PC-9 (cell line): ENCODE measurements at regions of chr18 and their contacts with region 1.

Region 1: DNA sequence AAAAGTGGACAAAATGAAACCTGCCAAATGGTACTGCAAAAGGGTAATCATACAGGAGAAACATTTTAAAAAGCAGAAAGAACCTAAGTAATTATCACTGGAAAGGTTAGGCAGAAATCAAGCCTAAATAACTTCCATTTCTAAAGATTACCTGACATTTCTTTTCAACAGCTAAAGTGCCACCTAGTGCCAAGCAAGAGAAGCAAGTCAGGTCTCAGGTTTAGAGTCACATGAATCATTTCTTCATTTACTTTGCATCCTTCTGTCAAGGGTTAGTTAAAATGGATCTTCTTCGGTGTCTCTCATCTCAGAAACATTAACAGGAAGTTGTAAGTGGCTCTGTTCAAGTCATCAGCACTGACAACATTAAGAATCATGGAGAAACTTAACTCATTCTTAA is 90.3 kb downstream of the AKAIN1 start:
- DNase-seq: no peak
- H3K4me3 ChIP-seq: no peak overlapping the region
- H3K27ac ChIP-seq: no peak overlapping the region
- H3K4me1 ChIP-seq: no peaks in the 10 kb centered on the region
- H3K27me3 ChIP-seq: no peaks in the 10 kb centered on the region
- CTCF ChIP-seq: no peak; the same call in 1 of the 2 replicates

Region 2: DNA sequence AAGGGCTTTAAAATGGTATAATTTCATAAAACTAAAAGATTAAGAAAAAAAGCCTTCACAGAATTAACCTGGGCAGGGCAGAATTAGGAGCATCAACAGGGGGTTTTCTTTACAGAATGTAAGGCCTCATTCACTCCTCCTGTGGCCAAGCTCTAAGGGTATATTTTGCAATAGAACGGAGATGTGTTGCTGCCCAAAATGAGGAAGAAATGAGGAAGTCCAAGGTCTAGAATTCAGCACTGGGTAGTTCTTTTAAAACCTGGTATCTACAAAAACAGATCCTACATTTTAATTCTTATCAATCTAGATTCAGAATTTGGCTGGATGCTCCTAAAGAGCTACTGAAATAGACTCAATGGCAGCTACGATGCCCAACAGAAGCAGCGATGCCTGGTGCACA is 11.5 kb before region 1 on chr18:
- CTCF ChIA-PET with region 1: no interaction called
- POLR2A ChIA-PET with region 1: no interaction called
- intact Hi-C with region 1: no loop called
- DNase-seq: no peak
- H3K4me3 ChIP-seq: no peak overlapping the region
- H3K27ac ChIP-seq: no peak overlapping the region
- H3K4me1 ChIP-seq: no peaks in the 10 kb centered on the region
- H3K27me3 ChIP-seq: no peaks in the 10 kb centered on the region
- CTCF ChIP-seq: no peak

Region 3: GRCh38 chr18:5122270-5122669 is 15.5 kb after region 1 on chr18:
- CTCF ChIA-PET with region 1: no interaction called
- POLR2A ChIA-PET with region 1: no interaction called
- intact Hi-C with region 1: loop called (anchors 2 kb)
- DNase-seq: no peak
- H3K4me3 ChIP-seq: no peak overlapping the region
- H3K27ac ChIP-seq: no peak overlapping the region
- H3K4me1 ChIP-seq: no peaks in the 10 kb centered on the region
- H3K27me3 ChIP-seq: peaks cover 6% of the 10 kb centered on the region; the same call in 1 of the 2 replicates
- CTCF ChIP-seq: no peak

Region 4: DNA sequence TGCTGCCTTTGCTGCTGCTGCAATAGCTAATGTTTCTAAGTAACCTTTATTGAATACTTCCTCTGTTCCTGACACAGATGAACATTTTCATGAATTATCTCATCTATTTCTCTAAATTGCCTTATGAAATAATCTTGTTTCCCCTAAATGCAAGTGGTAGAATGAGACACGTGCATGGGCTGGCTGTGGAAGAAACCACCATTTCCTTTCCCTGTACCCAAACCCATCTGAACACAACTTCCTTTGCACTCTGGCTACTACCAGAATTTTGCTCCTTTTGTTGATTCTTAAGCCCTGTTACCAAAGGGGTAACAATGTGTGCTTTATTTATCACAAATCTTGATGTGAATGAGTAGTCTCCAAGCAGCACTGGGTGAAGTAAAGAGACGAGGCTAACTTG is 61.1 kb after region 1 on chr18:
- CTCF ChIA-PET with region 1: no interaction called
- POLR2A ChIA-PET with region 1: no interaction called
- intact Hi-C with region 1: loop called (anchors 10 kb)
- DNase-seq: no peak
- H3K4me3 ChIP-seq: no peak overlapping the region
- H3K27ac ChIP-seq: no peak overlapping the region
- H3K4me1 ChIP-seq: no peaks in the 10 kb centered on the region
- H3K27me3 ChIP-seq: no peaks in the 10 kb centered on the region
- CTCF ChIP-seq: no peak